ENCODE measurements at regions of chr1 and their contacts with region 1.

Region 1: GRCh38 chr1:108963052-108963686 is at the start of gene CLCC1:
- DNase-seq: peak; percentile 85 to 90
- ATAC-seq: peak; percentile 97 to 99
- H3K4me3 ChIP-seq: peak within 1 kb of the TSS; percentile 62
- H3K27ac ChIP-seq: peak within 1 kb of the TSS; percentile 78 to 91
- H3K4me1 ChIP-seq: peaks cover 11% of the 10 kb centered on the region; the same call in 2 of the 3 replicates
- CTCF ChIP-seq: no peak
- EP300 ChIP-seq: no peak
- POLR2A ChIP-seq: peak; percentile 78
- RAD21 ChIP-seq: no peak
- polyA plus RNA-seq, gene CLCC1: 32.4 and 41.0 TPM in 2 replicates

Region 2: GRCh38 chr1:109099938-109100773 is 137.0 kb after region 1 on chr1:
- CTCF ChIA-PET with region 1: no interaction called
- POLR2A ChIA-PET with region 1: interaction called, 10 read pairs
- DNase-seq: peak; percentile 80 to 97
- ATAC-seq: peak; percentile 97 to 98
- H3K4me3 ChIP-seq: peak overlapping the region; percentile 93
- H3K27ac ChIP-seq: peak overlapping the region; percentile 93 to 94
- H3K4me1 ChIP-seq: peaks cover 9% of the 10 kb centered on the region
- CTCF ChIP-seq: peak; percentile 62
- EP300 ChIP-seq: no peak
- POLR2A ChIP-seq: peak; percentile 98
- RAD21 ChIP-seq: peak; percentile 36 to 53; a peak in 4 of 5 replicates

Measured in A549 (cell line).